Activated CD8-positive, alpha-beta memory T cell treated with anti-CD3 and anti-CD28 coated beads, Interleukin-2, amount 10 ng/mL, durations not matched to agents 7 days and 5 days (primary cell): ENCODE measurements at regions of chr17 and their contacts with region 1.

Region 1: DNA sequence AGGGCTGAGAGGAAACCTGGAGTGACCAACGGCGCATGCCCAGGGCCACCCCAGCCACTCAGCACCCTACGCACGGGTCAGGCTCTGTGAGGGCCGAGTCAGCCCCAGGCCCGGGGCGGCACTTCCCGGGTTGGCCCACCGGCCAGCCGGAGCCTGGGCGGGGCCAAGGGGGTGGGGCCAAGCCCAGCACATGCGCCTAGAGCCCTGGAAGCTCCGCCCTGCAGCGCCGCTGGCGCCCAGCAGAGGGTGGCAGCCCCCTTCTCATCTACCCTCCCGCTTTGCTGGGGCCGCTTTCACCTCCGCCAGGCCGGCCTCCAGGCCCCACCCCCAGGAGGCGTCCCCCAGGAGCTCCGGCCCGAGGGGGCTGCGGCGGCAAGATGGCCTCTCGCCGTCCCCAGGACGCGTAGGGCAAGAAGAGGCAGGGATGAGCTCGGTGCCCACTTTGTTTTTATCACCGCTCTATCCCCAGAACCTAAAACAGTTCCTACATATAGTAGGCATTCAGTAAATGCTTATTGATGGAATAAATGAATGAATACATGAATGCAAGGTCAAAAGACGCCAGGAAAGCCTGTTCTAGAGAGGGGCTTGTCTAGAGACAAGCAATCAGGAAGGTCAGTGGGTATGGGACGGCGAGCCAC is 31.3 kb downstream of the MYO18A start:
- DNase-seq: peak; percentile 96
- ATAC-seq: peak; percentile 95
- H3K4me3 Mint-ChIP-seq: peak overlapping the region; percentile 69
- H3K27ac Mint-ChIP-seq: peak overlapping the region; percentile 82
- H3K4me1 Mint-ChIP-seq: peaks cover 55% of the 10 kb centered on the region
- H3K27me3 Mint-ChIP-seq: no peaks in the 10 kb centered on the region

Region 2: GRCh38 chr17:29054835-29055234 is 94.1 kb before region 1 on chr17:
- CTCF ChIA-PET with region 1: no interaction called
- DNase-seq: no peak
- ATAC-seq: no peak
- H3K4me3 Mint-ChIP-seq: no peak overlapping the region
- H3K27ac Mint-ChIP-seq: no peak overlapping the region
- H3K4me1 Mint-ChIP-seq: no peaks in the 10 kb centered on the region
- H3K27me3 Mint-ChIP-seq: peaks cover 2% of the 10 kb centered on the region

Region 3: DNA sequence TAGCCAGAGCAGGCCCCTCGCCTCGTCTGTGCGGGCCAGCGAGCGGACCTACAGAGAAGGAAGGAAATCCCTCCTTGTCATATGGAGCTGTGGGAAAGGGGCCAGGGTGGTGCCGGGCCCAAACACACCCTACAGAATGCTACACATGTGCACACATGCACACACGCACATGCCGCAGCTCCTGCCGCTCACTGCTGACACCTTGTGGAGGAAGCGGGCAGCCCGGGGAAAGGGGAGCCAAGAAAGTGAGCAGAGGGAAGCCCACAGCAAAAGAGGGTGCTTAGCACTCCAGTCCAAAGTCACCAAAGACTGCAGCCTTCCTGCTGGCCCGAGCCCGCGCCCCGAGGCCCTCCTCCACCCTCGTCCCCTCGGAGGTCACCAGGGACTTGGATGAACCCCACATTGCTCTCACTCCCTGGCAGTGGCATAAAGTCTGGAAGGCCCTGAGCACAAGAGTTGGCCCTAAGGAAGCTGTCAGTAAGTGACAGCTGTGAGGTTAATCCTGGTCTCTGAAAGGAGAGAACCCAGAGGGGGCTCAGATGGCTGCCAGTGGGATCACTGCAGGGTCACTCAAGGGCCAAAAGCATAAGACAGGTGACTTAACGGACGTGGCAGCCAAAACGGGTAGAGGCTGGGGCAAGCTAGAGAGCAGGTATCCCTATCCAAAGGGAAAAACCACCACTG is 37.0 kb before region 1 on chr17:
- CTCF ChIA-PET with region 1: interaction called, 557 read pairs
- DNase-seq: peak; percentile 78
- ATAC-seq: peak; percentile 74
- H3K4me3 Mint-ChIP-seq: no peak overlapping the region
- H3K27ac Mint-ChIP-seq: no peak overlapping the region
- H3K4me1 Mint-ChIP-seq: peaks cover 9% of the 10 kb centered on the region
- H3K27me3 Mint-ChIP-seq: no peaks in the 10 kb centered on the region

Region 4: GRCh38 chr17:29133146-29133713 is 15.7 kb before region 1 on chr17:
- CTCF ChIA-PET with region 1: interaction called, 91 read pairs
- DNase-seq: no peak
- ATAC-seq: no peak
- H3K4me3 Mint-ChIP-seq: no peak overlapping the region
- H3K27ac Mint-ChIP-seq: no peak overlapping the region
- H3K4me1 Mint-ChIP-seq: peaks cover 56% of the 10 kb centered on the region
- H3K27me3 Mint-ChIP-seq: no peaks in the 10 kb centered on the region

Region 5: GRCh38 chr17:29190039-29190438 is 41.1 kb after region 1 on chr17:
- CTCF ChIA-PET with region 1: interaction called, 10 read pairs
- DNase-seq: no peak
- ATAC-seq: no peak
- H3K4me3 Mint-ChIP-seq: no peak overlapping the region
- H3K27ac Mint-ChIP-seq: no peak overlapping the region
- H3K4me1 Mint-ChIP-seq: peaks cover 2% of the 10 kb centered on the region
- H3K27me3 Mint-ChIP-seq: peaks cover 19% of the 10 kb centered on the region

Region 6: DNA sequence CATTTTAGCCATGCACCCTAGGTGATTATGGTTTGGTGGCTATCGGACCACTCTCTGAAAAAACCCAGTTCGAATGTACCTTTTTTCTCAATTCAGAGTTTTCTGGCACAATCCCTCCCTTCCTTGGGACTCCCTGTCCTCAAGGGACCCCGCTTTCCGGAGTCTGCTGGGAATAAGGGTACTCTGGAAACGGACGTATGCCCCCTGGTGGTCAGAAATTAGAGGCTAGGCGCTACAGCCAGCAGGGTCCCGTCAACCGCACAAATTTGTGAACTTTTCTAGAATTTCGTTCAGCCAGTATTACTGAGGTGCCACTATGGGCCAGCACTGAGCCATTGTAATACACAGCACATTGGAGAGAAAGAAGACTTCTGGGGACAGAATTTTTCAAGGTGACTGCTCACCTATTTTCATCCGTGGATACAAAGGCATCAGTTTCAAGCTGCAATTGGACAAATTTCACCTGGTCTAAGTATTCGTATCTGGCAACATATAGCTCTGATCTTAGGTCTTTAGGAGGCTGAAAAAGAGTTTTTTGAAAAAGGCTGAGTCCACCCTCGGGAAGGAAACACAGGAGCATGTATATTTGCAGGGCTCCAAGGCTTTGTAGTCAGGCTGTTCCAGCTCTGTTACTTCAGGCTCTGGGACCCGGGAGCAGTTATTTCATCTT is 70.6 kb after region 1 on chr17:
- CTCF ChIA-PET with region 1: interaction called, 304 read pairs
- DNase-seq: peak; percentile 80
- ATAC-seq: peak; percentile 92
- H3K4me3 Mint-ChIP-seq: no peak overlapping the region
- H3K27ac Mint-ChIP-seq: no peak overlapping the region
- H3K4me1 Mint-ChIP-seq: peaks cover 9% of the 10 kb centered on the region
- H3K27me3 Mint-ChIP-seq: peaks cover 3% of the 10 kb centered on the region

Region 7: GRCh38 chr17:29292992-29293889 is 144.3 kb after region 1 on chr17:
- CTCF ChIA-PET with region 1: interaction called, 72 read pairs
- DNase-seq: peak; percentile 79
- ATAC-seq: peak; percentile 32
- H3K4me3 Mint-ChIP-seq: peak overlapping the region; percentile 98
- H3K27ac Mint-ChIP-seq: peak overlapping the region; percentile 98
- H3K4me1 Mint-ChIP-seq: peaks cover 41% of the 10 kb centered on the region
- H3K27me3 Mint-ChIP-seq: no peaks in the 10 kb centered on the region